ENCODE measurements at regions of chr22 and their contacts with region 1.

Region 1: DNA sequence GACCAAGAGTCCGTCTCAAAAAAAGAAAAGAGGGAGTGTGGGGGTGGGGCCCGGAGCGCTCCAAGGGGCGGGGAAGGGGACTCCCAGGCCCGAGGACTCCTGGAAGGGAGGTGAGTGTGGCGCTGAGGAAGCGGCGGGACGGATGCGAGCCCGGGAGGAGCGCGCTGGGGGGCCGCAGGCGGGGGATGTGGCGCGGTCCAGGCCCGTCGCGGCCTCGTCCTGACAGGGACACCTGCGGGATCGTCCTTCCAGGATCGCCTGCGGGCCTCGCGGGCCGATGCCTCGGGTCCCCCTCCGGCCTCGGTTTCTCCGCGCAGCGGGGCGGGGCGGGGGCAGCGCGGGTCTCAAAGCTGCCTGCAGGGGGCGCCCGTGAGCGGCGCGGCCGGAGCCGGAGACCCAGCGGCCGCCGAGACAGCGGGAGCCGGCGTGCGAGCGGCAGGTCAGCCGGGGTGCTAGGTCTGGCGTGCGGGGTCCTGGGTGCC is 3.8 kb upstream of the ADORA2A start:
- DNase-seq: peak; percentile 70
- H3K4me3 Mint-ChIP-seq: peak overlapping the region; percentile 69
- H3K27ac Mint-ChIP-seq: no peak overlapping the region
- H3K4me1 Mint-ChIP-seq: peaks cover 39% of the 10 kb centered on the region
- H3K27me3 Mint-ChIP-seq: peaks cover 40% of the 10 kb centered on the region

Region 2: GRCh38 chr22:24433813-24434470 is 10.4 kb after region 1 on chr22:
- CTCF ChIA-PET with region 1: interaction called, 48 read pairs
- DNase-seq: no peak
- H3K4me3 Mint-ChIP-seq: peak overlapping the region; percentile 25
- H3K27ac Mint-ChIP-seq: peak overlapping the region; percentile 81
- H3K4me1 Mint-ChIP-seq: peaks cover 86% of the 10 kb centered on the region
- H3K27me3 Mint-ChIP-seq: no peaks in the 10 kb centered on the region

Region 3: GRCh38 chr22:24503137-24503842 is 79.7 kb after region 1 on chr22:
- CTCF ChIA-PET with region 1: interaction called, 18 read pairs
- DNase-seq: peak; percentile 73
- H3K4me3 Mint-ChIP-seq: no peak overlapping the region
- H3K27ac Mint-ChIP-seq: no peak overlapping the region
- H3K4me1 Mint-ChIP-seq: peaks cover 17% of the 10 kb centered on the region
- H3K27me3 Mint-ChIP-seq: peaks cover 48% of the 10 kb centered on the region

Region 4: GRCh38 chr22:24525416-24526037 is 102.0 kb after region 1 on chr22:
- CTCF ChIA-PET with region 1: interaction called, 79 read pairs
- DNase-seq: peak; percentile 91
- H3K4me3 Mint-ChIP-seq: no peak overlapping the region
- H3K27ac Mint-ChIP-seq: no peak overlapping the region
- H3K4me1 Mint-ChIP-seq: peaks cover 8% of the 10 kb centered on the region
- H3K27me3 Mint-ChIP-seq: peaks cover 18% of the 10 kb centered on the region